Common myeloid progenitor, CD34-positive (primary cell): ENCODE measurements at regions of chr22 and their contacts with region 1.

Region 1: DNA sequence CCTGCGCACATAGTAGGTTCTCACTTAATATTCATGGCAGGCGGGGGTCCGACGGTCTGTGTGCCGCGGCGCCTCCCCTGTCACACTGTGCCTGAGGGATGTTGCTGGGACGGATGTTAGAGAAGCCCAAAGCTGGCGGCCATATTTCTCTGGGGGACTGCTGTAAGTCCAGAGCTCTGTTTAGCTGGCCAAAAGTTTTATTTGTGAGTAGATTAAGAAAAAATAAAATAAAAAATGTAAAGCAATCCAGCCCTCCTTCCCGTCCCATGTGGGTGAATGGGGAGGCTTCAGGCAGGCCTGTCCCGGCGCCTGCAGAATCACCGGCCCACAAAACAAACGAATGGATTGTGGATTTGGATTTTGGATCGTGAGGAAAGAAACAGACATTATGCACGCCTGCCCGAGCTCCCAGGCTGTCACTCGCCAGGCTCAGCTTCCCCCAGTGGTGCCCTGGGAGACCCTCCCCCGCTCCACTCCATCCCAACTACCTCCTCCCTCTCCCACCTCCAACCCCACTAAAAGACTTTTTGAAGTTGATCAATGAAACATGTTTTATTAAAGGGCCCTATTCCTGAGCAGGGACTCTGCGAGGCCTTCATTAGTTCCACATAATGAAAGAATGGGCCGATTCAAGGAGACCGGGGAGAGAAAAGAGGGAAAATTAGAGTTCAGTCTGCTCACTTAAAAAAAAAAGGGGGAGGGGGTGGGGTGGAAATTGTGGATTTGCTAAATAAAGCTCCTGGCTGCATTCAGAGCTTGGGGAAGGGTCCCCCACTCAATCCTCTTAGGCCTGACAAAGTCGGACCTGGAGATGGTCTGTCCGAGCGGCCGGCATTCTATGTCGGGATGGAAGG is 20.4 kb upstream of the SCUBE1 start:
- DNase-seq: no peak
- H3K4me3 ChIP-seq: no peak overlapping the region
- H3K27ac ChIP-seq: no peak overlapping the region
- H3K4me1 ChIP-seq: no peaks in the 10 kb centered on the region
- H3K27me3 ChIP-seq: peaks cover 0 to 4% (median 0%) of the 10 kb centered on the region in 5 experiments

Region 2: GRCh38 chr22:43377896-43378704 is 14.6 kb after region 1 on chr22:
- CTCF ChIA-PET with region 1: interaction called, 11 read pairs
- POLR2A ChIA-PET with region 1: no interaction called
- DNase-seq: peak; percentile 63 to 90 (median 86)
- H3K4me3 ChIP-seq: peak overlapping the region in 3 of 7 experiments; percentile 4 to 54 (median 51)
- H3K27ac ChIP-seq: peak overlapping the region; percentile 23 to 50
- H3K4me1 ChIP-seq: peaks cover 15 to 48% (median 40%) of the 10 kb centered on the region in 4 experiments
- H3K27me3 ChIP-seq: no peaks in the 10 kb centered on the region

Region 3: GRCh38 chr22:43412808-43413795 is 49.6 kb after region 1 on chr22:
- CTCF ChIA-PET with region 1: no interaction called
- POLR2A ChIA-PET with region 1: no interaction called
- DNase-seq: no peak
- H3K4me3 ChIP-seq: no peak overlapping the region
- H3K27ac ChIP-seq: no peak overlapping the region
- H3K4me1 ChIP-seq: peaks cover 0 to 8% (median 3%) of the 10 kb centered on the region in 4 experiments
- H3K27me3 ChIP-seq: peaks cover 14 to 84% (median 39%) of the 10 kb centered on the region in 5 experiments

Region 4: GRCh38 chr22:43435851-43436811 is 72.6 kb after region 1 on chr22:
- CTCF ChIA-PET with region 1: no interaction called
- POLR2A ChIA-PET with region 1: no interaction called
- DNase-seq: no peak
- H3K4me3 ChIP-seq: no peak overlapping the region
- H3K27ac ChIP-seq: no peak overlapping the region
- H3K4me1 ChIP-seq: peaks cover 0 to 7% (median 3%) of the 10 kb centered on the region in 4 experiments
- H3K27me3 ChIP-seq: peaks cover 0 to 20% (median 15%) of the 10 kb centered on the region in 5 experiments